Posterior vena cava (tissue), 2 donors: ENCODE measurements at regions of chr9 and their contacts with region 1.

Region 1: DNA sequence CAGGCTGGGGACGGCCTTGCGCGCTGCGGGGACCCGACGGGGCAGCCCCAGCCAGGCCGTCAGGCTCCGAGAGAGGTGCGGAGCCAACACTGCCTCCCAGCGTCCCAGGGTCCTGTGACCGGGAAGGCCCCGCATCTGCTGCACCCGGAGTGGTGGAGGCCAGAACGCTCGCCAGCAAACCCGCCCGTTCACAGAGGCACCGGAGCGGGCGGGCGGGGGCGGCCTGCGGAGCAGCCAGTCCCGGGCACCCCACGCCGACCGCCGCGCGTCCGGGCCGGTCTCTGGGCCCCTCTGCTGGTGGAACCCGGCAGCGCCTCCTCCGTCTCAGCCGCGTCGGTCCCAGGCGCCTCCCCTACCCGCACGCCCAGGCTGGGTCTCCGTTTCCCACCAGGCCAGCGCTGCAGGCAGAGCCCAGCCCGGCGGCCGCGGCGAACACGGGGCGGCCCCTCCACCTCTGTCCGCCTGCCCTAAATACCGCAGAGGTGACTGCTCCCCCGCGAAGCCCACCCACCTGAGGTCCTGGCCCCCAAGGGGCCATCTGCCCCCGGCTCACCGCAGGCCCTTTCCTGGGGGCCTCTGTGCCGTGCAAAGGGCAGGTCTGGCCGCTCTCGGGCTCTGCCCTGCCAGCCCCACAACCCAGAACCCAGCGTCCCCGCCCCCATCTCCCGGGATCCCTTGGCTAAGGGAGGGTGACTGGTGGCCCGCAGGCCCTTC is 15.9 kb downstream of the EXD3 start:
- DNase-seq: no peak

Region 2: GRCh38 chr9:136451221-136451877 is 955.7 kb before region 1 on chr9:
- intact Hi-C with region 1: loop called in 1 of 2 experiments (anchors 10 kb)
- DNase-seq: no peak

Region 3: DNA sequence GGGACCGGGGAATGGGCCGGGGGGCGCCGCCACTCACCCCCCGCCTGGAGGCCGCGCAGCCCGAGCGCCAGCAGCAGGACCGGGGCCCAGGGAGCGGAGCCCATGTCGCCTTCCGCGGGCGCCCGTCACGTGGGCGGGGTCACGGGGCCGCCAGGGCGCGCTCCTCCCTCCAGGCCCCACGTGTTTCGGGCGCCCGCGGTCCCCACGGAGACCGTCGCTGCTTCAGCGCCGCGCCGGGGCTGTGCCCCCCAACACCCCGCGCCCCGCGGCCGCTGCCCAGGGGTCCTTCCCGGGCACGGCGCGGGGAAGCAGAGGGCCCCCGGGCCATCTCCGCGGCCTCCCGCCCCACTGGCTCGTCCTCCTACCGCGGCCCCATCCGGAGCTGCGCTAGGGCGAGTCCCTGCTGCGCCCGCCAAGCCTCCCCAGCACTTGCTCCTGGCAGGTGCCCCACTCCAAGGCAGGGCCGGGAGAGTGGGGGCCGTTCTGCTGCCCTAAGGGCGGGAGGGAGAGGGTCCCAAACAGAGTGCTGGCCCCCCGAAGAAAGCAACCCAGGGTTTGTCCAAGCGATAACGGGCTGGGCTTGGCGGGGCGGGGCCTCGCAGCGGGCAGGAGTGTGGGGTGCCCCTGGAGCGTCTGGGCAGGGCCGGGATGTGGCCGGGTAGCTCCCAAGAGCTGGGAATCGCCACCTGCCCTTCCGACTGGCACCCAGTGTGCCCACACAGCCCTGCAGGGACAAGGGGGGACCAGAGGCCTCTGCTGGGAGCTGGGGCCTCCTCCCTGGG is 292.2 kb before region 1 on chr9 and contains the start of gene DPP7:
- intact Hi-C with region 1: loop called in 1 of 2 experiments (anchors 10 kb)
- DNase-seq: peak; percentile 92
- total RNA-seq, gene DPP7: 108 to 128 TPM

Region 4: DNA sequence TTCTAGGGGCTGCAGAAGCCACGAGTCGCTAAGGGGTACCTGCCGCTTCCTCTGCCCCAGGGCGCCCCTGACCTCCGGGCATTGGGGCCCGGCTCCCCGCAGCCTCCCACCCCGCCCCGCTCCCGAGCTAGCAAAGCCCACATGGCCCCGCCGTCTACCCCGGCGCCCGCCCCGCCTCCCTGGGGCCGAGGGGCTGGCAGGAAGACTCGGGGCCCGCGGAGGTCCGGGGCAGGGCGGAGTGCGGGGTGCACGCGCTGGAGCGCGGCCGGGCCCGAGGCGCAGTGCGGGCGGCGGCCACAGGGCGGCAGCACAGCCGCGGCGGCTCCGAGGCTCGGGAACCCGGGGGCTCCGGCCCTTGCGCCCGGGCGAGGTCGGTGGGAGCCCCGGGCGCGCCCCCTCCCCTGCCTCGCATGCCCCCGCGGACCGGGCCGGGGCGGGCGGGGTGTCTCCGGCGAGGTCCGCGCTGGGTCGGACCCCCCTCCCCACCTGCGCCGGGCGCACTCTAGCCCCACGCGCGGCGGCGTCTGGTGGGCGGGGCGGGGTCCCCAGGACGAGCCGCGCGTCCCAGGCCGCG is 111.7 kb before region 1 on chr9:
- intact Hi-C with region 1: loop called in 1 of 2 experiments (anchors 5 kb)
- DNase-seq: no peak

Region 5: DNA sequence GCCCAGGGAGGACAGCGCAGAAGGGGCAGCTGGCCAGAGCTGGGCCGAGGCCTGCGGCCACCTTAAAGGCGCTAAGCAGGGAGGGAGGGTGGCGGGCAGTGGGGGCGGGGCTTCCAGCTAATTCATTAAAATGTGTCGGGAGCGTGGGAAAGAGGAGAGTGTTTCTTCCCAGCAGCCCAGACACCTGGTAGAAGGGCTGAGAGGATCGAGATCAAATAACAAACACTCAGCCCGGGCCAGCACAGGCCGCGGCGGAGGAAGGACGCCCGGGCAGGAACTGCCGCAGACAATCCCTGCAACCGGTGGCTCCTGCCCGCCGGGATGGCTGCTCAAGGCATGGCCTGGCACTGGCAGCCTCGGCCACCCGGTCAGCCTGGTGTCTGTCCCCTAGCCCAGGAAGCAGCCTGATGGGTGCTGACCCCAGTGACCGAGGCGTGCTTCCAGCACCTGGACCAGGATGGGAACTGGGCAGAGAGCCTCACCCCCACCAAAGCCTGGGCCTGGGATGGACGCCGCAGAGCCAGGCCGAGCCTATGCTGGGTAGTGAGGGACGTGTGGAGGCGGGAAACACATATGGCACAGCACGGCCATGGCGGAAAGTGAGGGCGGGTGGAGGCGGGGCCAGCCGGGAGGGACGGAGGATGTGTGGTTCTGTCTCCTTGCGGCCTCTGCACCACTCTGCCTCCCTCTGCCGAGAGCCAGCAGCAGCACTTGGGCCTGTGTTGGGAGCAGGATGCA is 101.8 kb before region 1 on chr9:
- intact Hi-C with region 1: loop called in 1 of 2 experiments (anchors 5 kb)
- DNase-seq: no peak

Region 6: DNA sequence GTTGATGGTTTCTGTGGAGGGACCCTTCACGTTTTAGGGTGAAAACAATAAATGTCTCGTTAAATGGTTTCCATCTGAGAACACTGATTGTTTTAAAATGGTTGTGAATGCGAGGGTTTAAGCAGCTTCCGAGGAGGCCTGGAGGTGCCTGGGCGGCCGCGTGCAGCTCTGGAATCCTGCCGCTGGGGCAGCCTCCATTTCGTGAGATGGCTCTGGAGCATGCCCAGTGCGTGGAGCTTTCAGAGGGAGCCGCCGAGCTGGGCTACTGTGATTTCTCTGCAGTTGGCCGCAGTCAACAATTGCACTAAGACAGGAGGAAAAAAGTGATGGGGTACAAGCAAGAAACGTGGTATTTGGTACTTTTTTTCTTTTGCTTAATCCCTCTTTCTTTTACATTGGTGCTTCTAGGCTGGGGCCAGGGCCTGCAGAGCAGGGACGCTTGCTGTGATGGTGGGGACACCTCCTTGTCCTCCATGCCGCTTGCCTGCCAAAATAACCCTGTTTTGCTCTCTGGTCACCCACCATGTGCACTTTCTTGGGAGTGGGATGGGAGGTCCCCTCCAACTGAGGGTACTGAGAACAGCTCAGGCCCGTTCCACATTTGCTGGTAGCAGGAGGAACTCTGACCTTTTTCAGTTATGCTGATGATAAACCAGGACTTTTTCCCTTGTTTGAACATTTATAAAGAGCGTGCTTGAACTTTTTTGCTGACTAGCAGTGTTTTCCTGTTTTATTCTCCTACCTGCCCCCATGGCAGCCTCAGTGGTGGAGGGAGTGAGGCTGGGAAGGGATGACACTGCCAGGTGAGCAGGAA is 258.9 kb after region 1 on chr9:
- intact Hi-C with region 1: no loop called
- DNase-seq: peak; percentile 52